ENCODE measurements at regions of chr6 and their contacts with region 1.

Region 1: GRCh38 chr6:149513915-149514314 is 29.1 kb upstream of the ZC3H12D start:
- DNase-seq: no peak
- ATAC-seq: no peak
- H3K4me3 ChIP-seq: no peak overlapping the region
- H3K27ac ChIP-seq: no peak overlapping the region
- H3K4me1 ChIP-seq: no peaks in the 10 kb centered on the region
- H3K27me3 ChIP-seq: no peaks in the 10 kb centered on the region
- CTCF ChIP-seq: no peak
- EP300 ChIP-seq: no peak
- POLR2A ChIP-seq: no peak
- RAD21 ChIP-seq: no peak

Region 2: DNA sequence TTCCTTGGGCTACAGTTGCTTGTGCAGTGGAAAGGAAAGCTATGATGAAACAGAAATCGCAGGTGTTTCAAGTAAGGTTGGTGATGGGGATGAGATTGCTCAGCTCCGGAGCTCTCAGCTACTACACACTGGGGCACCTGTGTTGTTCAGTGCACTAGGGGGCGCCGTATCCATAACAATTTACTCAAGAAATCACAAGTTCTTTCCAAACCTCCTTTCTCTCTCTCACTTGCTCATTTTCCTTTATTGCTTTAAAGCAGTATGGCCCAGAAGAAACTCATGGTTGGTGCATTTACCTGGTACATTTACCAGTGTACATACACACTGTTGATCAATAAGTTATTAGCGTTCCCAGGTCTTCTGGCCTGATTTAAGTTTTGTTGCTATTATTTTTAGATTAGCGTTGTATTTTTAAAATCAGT is 431.6 kb before region 1 on chr6:
- CTCF ChIA-PET with region 1: interaction called, 21 read pairs
- POLR2A ChIA-PET with region 1: no interaction called
- RAD21 ChIA-PET with region 1: interaction called, 23 read pairs
- SMC1A ChIA-PET with region 1: interaction called, 8 read pairs
- in situ Hi-C with region 1: no loop called
- intact Hi-C with region 1: loop called (anchors 2 kb)
- DNase-seq: no peak
- ATAC-seq: peak; percentile 91
- H3K4me3 ChIP-seq: no peak overlapping the region
- H3K27ac ChIP-seq: no peak overlapping the region
- H3K4me1 ChIP-seq: peaks cover 33% of the 10 kb centered on the region
- H3K27me3 ChIP-seq: no peaks in the 10 kb centered on the region
- CTCF ChIP-seq: peak; percentile 77 to 88 (median 79)
- EP300 ChIP-seq: no peak
- POLR2A ChIP-seq: no peak
- RAD21 ChIP-seq: peak; percentile 94

Region 3: DNA sequence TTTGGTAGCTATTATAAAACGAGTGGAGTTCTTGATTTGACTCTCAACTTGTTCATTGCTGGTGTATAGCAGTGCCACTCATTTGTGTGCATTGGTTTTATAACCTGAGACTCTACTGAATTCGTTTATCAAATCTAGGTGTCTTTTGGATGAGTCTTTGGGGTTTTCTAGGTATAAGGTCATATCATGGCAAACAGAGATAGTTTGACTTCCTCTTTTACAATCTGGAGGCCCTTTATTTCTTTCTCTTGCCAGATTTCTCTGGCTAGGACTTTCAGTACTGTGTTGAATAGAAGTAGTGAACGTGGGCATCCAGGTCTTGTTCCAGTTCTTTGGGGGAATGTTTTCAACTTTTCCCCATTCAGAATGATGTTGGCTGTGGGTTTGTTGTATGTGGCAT is 75.1 kb before region 1 on chr6:
- CTCF ChIA-PET with region 1: interaction called, 103 read pairs
- POLR2A ChIA-PET with region 1: no interaction called
- RAD21 ChIA-PET with region 1: interaction called, 78 read pairs
- SMC1A ChIA-PET with region 1: interaction called, 100 read pairs
- in situ Hi-C with region 1: no loop called
- intact Hi-C with region 1: no loop called
- DNase-seq: no peak
- ATAC-seq: peak; percentile 80
- H3K4me3 ChIP-seq: no peak overlapping the region
- H3K27ac ChIP-seq: no peak overlapping the region
- H3K4me1 ChIP-seq: peaks cover 9% of the 10 kb centered on the region
- H3K27me3 ChIP-seq: no peaks in the 10 kb centered on the region
- CTCF ChIP-seq: no peak
- EP300 ChIP-seq: 0 out of 4 replicates have a peak, but pooled peaks of 1 of the 2 experiments have one; percentile 35
- POLR2A ChIP-seq: no peak
- RAD21 ChIP-seq: no peak

Region 4: DNA sequence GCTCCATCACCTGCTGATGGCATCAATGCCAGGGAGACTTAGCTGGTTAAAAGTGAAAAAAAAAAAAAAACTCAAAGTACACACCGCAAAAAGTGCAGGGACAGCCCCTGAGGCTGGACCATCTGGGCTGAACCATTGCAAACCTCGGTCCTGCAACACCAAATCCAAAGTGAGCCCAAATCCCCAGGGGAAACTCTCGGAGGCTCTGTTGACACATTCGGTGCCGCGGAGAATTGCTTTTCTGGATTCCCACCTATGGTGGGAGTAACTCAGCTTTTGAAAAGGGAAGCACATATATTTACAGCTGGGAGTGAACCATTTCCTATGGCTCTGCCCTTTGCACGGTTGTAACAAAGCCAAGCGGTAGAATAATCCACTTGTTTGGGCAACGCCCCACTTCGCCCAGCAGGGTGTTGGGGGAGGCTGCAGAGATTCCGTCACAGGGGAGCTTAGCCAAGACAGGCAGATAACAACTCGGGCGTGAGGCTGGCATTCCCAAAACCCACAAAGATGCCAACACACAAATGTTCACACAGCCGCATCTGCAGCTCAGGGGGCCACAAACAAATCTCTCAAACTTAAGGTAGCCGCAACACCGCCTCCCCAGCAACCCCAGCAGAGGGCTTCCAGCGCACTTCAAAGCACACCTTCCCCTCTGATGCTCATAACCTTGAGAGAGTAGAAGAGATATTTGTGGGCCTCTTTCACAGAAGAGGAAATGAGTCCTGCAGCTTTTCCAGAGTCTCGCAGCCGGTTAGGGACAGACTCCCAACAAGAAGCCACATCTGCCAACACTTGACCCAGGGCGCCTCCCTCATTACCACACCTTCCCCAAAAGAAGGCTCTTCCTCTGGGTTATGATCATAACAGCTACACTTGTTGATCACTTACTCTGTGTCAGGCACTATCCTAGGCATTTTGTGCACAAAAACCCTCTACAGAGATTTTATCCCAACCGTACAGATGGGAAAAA is 40.5 kb before region 1 on chr6:
- CTCF ChIA-PET with region 1: interaction called, 50 read pairs
- POLR2A ChIA-PET with region 1: interaction called, 5 read pairs
- RAD21 ChIA-PET with region 1: interaction called, 28 read pairs
- SMC1A ChIA-PET with region 1: interaction called, 42 read pairs
- in situ Hi-C with region 1: no loop called
- intact Hi-C with region 1: loop called (anchors 2 kb)
- DNase-seq: no peak
- ATAC-seq: peak; percentile 24
- H3K4me3 ChIP-seq: peak overlapping the region; percentile 44; the same call in 1 of the 2 replicates
- H3K27ac ChIP-seq: peak overlapping the region; percentile 29
- H3K4me1 ChIP-seq: peaks cover 63% of the 10 kb centered on the region
- H3K27me3 ChIP-seq: no peaks in the 10 kb centered on the region
- CTCF ChIP-seq: peak in 2 of 3 experiments; percentile 12 to 27; a peak in 1 of 6 replicates
- EP300 ChIP-seq: no peak
- POLR2A ChIP-seq: no peak
- RAD21 ChIP-seq: peak; percentile 34; the same call in 1 of the 2 replicates

Region 5: GRCh38 chr6:149493761-149494320 is 20.1 kb before region 1 on chr6:
- CTCF ChIA-PET with region 1: interaction called, 54 read pairs
- POLR2A ChIA-PET with region 1: interaction called, 6 read pairs
- RAD21 ChIA-PET with region 1: interaction called, 36 read pairs
- SMC1A ChIA-PET with region 1: interaction called, 40 read pairs
- in situ Hi-C with region 1: no loop called
- intact Hi-C with region 1: no loop called
- DNase-seq: no peak
- ATAC-seq: no peak
- H3K4me3 ChIP-seq: no peak overlapping the region
- H3K27ac ChIP-seq: no peak overlapping the region
- H3K4me1 ChIP-seq: peaks cover 47% of the 10 kb centered on the region
- H3K27me3 ChIP-seq: no peaks in the 10 kb centered on the region
- CTCF ChIP-seq: no peak
- EP300 ChIP-seq: no peak
- POLR2A ChIP-seq: no peak
- RAD21 ChIP-seq: no peak